Activated B cell treated with CpG ODN at 0.5 μM for 24 hours (primary cell): ENCODE measurements at regions of chr17 and their contacts with region 1.

Region 1: DNA sequence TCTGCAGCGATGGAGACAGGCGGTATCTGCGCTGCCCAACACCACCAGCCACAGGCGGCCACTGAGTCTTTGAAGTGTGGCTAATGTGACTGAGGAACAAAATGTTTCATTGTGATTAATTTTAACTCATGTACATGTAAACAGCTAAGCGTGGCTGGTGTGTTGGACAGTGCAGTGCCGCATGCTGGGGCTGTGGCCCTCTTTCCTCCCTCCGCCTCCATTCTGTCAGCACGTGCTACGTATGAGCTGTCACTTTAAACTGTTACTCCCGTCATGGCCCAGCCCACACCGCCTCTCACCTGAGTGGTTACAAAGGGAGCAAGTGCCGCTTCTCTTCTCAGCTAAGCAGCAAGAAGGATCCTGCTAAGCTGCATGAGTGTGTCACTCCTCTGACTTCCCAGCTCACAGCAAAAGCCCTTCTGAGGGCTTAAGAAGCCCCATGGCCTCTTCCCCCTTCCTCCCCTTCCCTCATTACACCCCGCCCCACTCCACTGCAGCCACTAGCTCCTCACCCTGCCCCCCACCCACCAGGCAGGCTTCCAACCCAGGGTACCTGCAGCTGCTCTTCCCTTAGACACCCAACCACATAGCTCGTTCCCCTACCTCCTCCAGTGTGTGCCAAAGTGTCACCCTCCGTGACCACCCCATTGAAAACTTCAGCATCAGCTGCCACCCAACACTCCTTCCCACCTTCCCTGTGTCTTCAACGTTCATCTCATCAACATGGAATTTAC is 15.0 kb downstream of the HASPIN start:
- DNase-seq: no peak
- ATAC-seq: peak; percentile 43
- H3K4me3 Mint-ChIP-seq: no peak overlapping the region
- H3K27ac Mint-ChIP-seq: peak overlapping the region; percentile 70
- H3K4me1 Mint-ChIP-seq: peaks cover 34% of the 10 kb centered on the region
- H3K27me3 Mint-ChIP-seq: no peaks in the 10 kb centered on the region
- CTCF ChIP-seq: no peak

Region 2: DNA sequence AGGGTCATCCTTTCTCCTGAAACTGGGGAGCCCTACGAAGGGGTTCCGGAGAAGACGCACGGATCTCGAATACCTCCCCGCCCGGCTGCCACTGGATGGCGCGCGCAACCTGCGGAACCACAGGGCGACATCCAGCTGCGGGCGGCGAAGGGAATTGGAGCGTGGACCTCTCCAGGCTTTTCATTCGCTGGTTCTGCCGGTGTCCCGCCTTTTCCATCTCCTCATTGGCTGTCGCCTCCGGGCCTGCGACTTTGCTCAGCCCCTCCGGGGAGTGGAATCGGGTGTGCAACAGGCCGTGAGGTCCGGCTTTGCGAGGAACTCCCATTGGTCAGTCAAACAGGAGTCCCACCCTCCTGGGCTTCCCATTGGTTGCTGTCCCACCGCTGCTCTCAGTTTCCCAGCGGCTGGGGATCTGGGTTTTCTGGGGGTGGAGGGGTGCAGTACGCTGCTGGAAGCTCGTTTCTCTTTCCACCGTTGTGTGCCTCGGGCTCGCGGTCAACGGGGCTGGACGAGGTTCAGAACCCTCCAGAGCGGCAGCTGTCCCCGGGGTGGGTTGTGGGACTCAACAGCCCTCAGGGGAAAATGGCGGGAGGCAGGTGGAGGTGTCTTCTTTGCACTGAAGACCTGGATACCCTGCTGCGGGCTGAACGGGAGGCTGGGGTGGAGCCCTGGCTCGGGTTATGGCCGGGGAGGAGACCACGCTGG is 689.8 kb before region 1 on chr17:
- CTCF ChIA-PET with region 1: interaction called, 7 read pairs
- POLR2A ChIA-PET with region 1: interaction called, 3 read pairs
- intact Hi-C with region 1: loop called (anchors 10 kb)
- DNase-seq: peak; percentile 80
- ATAC-seq: peak; percentile 98
- H3K4me3 Mint-ChIP-seq: peak overlapping the region; percentile 92
- H3K27ac Mint-ChIP-seq: peak overlapping the region; percentile 83
- H3K4me1 Mint-ChIP-seq: peaks cover 8% of the 10 kb centered on the region
- H3K27me3 Mint-ChIP-seq: no peaks in the 10 kb centered on the region
- CTCF ChIP-seq: no peak

Region 3: GRCh38 chr17:3723556-3724369 is 15.0 kb before region 1 on chr17 and contains the start of gene HASPIN:
- CTCF ChIA-PET with region 1: interaction called, 25 read pairs
- POLR2A ChIA-PET with region 1: interaction called, 6 read pairs
- intact Hi-C with region 1: no loop called
- DNase-seq: peak; percentile 91
- ATAC-seq: peak; percentile 73
- H3K4me3 Mint-ChIP-seq: peak within 1 kb of the TSS; percentile 92
- H3K27ac Mint-ChIP-seq: peak within 1 kb of the TSS; percentile 85
- H3K4me1 Mint-ChIP-seq: peaks cover 72% of the 10 kb centered on the region
- H3K27me3 Mint-ChIP-seq: no peaks in the 10 kb centered on the region
- CTCF ChIP-seq: no peak
- total RNA-seq, gene HASPIN: 6.4 and 6.7 TPM in 2 replicates

Region 4: GRCh38 chr17:3802461-3803307 is 64.0 kb after region 1 on chr17:
- CTCF ChIA-PET with region 1: interaction called, 13 read pairs
- POLR2A ChIA-PET with region 1: interaction called, 3 read pairs
- intact Hi-C with region 1: no loop called
- DNase-seq: no peak
- ATAC-seq: no peak
- H3K4me3 Mint-ChIP-seq: no peak overlapping the region
- H3K27ac Mint-ChIP-seq: peak overlapping the region; percentile 57
- H3K4me1 Mint-ChIP-seq: peaks cover 54% of the 10 kb centered on the region
- H3K27me3 Mint-ChIP-seq: no peaks in the 10 kb centered on the region
- CTCF ChIP-seq: no peak

Region 5: GRCh38 chr17:3827124-3827773 is 88.5 kb after region 1 on chr17:
- CTCF ChIA-PET with region 1: interaction called, 245 read pairs
- POLR2A ChIA-PET with region 1: interaction called, 33 read pairs
- intact Hi-C with region 1: loop called (anchors 1 kb)
- DNase-seq: no peak
- ATAC-seq: peak; percentile 68
- H3K4me3 Mint-ChIP-seq: no peak overlapping the region
- H3K27ac Mint-ChIP-seq: no peak overlapping the region
- H3K4me1 Mint-ChIP-seq: peaks cover 1% of the 10 kb centered on the region
- H3K27me3 Mint-ChIP-seq: no peaks in the 10 kb centered on the region
- CTCF ChIP-seq: no peak

Region 6: GRCh38 chr17:4023220-4023619 is 284.5 kb after region 1 on chr17:
- CTCF ChIA-PET with region 1: no interaction called
- POLR2A ChIA-PET with region 1: no interaction called
- intact Hi-C with region 1: no loop called
- DNase-seq: no peak
- ATAC-seq: no peak
- H3K4me3 Mint-ChIP-seq: no peak overlapping the region
- H3K27ac Mint-ChIP-seq: no peak overlapping the region
- H3K4me1 Mint-ChIP-seq: no peaks in the 10 kb centered on the region
- H3K27me3 Mint-ChIP-seq: no peaks in the 10 kb centered on the region
- CTCF ChIP-seq: no peak

Region 7: DNA sequence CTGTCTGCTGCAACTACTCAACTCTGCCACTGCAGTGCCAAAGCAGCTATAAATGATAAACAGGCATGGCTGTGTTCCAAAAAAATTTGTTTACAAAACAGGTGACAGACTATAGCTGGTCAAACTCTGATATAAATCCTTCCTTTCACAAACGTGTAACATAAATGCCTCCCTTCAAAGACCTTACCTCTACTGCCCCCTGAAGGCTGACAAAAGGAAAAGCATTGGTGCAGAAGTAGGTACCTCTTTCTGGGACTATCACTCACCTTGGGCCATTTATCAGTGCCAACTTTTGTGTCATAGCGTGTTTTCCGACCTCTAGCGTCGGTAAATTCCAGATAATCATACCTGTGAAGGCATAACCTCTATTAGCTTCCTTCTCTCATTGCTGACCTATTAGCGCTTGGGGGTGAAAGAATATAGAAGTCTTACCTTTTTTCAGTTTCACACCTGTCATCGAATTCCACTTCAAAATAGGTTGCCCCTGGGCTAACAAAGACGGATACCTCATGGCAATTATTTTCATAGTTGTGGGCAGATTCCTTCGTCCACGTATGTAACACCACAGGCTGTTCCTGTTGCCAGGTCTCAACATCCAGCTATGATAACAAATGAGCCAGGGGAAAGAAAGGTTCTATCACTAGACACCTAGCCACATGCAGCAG is 336.2 kb after region 1 on chr17:
- CTCF ChIA-PET with region 1: interaction called, 6 read pairs
- POLR2A ChIA-PET with region 1: no interaction called
- intact Hi-C with region 1: loop called (anchors 10 kb)
- DNase-seq: no peak
- ATAC-seq: peak; percentile 53
- H3K4me3 Mint-ChIP-seq: peak overlapping the region; percentile 76
- H3K27ac Mint-ChIP-seq: peak overlapping the region; percentile 84
- H3K4me1 Mint-ChIP-seq: peaks cover 18% of the 10 kb centered on the region
- H3K27me3 Mint-ChIP-seq: no peaks in the 10 kb centered on the region
- CTCF ChIP-seq: no peak